ENCODE measurements at regions of chr19 and their contacts with region 1.

Region 1: GRCh38 chr19:48588670-48589399 is 17.7 kb upstream of the SPACA4 start:
- DNase-seq: peak; percentile 91
- H3K4me3 Mint-ChIP-seq: peak overlapping the region; percentile 66
- H3K27ac Mint-ChIP-seq: peak overlapping the region; percentile 16
- H3K4me1 Mint-ChIP-seq: peaks cover 11% of the 10 kb centered on the region
- H3K27me3 Mint-ChIP-seq: peaks cover 4% of the 10 kb centered on the region

Region 2: GRCh38 chr19:48271531-48272151 is 317.2 kb before region 1 on chr19:
- CTCF ChIA-PET with region 1: interaction called, 4 read pairs
- intact Hi-C with region 1: loop called (anchors 1 kb)
- DNase-seq: peak; percentile 23
- H3K4me3 Mint-ChIP-seq: peak overlapping the region; percentile 81
- H3K27ac Mint-ChIP-seq: no peak overlapping the region
- H3K4me1 Mint-ChIP-seq: peaks cover 14% of the 10 kb centered on the region
- H3K27me3 Mint-ChIP-seq: peaks cover 8% of the 10 kb centered on the region

Region 3: DNA sequence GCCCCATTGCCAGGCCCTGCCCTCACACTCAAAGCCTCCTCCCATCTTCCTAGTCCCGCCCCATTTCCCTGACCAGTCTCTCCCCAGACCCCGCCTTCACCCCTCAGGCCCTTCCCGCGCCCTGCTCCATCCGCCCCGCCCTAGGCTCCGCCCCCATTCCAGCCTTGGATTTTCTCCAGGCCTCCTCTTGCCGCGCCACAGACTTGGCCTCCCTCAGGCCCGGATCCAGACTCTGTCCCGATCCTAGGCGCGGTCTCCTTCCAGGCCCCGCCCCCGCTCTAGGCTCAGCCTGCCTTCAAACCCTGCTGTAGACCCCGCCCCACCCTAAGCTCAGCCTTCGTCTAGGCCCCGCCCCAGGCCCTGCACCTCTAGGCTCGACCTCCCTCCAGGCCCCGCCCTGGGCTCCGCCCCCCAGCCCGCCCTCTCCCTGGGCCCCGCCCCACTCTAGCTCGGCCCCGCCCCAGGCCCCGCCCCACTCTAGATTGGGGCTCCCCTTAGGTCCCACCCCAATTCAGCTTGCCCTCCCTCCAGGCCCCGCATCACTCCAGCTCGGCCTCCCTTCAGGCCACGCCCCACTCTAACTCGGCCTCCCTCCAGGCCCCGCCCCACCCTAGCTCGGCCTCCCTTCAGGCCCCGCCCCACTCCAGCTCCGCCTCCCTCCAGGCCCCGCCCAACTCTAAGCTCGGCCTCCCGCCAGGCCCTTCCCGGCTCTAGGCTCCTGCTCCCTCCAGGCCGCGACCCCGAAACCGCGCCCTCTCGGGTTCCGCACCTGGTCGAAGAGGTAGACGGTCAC is 95.7 kb before region 1 on chr19:
- CTCF ChIA-PET with region 1: interaction called, 62 read pairs
- intact Hi-C with region 1: loop called (anchors 1 kb)
- DNase-seq: peak; percentile 86
- H3K4me3 Mint-ChIP-seq: peak overlapping the region; percentile 62
- H3K27ac Mint-ChIP-seq: no peak overlapping the region
- H3K4me1 Mint-ChIP-seq: peaks cover 31% of the 10 kb centered on the region
- H3K27me3 Mint-ChIP-seq: peaks cover 38% of the 10 kb centered on the region

Region 4: GRCh38 chr19:48568345-48568886 is 20.4 kb before region 1 on chr19:
- CTCF ChIA-PET with region 1: interaction called, 13 read pairs
- intact Hi-C with region 1: no loop called
- DNase-seq: no peak
- H3K4me3 Mint-ChIP-seq: no peak overlapping the region
- H3K27ac Mint-ChIP-seq: no peak overlapping the region
- H3K4me1 Mint-ChIP-seq: no peaks in the 10 kb centered on the region
- H3K27me3 Mint-ChIP-seq: peaks cover 2% of the 10 kb centered on the region